Left ventricle myocardium inferior (tissue), 1 donor: ENCODE measurements at regions of chr18 and their contacts with region 1.

Region 1: GRCh38 chr18:74337155-74337911 is 21.7 kb downstream of the C18orf63 start:
- DNase-seq: no peak
- H3K4me3 ChIP-seq: no peak overlapping the region
- H3K27ac ChIP-seq: no peak overlapping the region
- H3K4me1 ChIP-seq: no peaks in the 10 kb centered on the region
- H3K27me3 ChIP-seq: no peaks in the 10 kb centered on the region
- CTCF ChIP-seq: no peak

Region 2: DNA sequence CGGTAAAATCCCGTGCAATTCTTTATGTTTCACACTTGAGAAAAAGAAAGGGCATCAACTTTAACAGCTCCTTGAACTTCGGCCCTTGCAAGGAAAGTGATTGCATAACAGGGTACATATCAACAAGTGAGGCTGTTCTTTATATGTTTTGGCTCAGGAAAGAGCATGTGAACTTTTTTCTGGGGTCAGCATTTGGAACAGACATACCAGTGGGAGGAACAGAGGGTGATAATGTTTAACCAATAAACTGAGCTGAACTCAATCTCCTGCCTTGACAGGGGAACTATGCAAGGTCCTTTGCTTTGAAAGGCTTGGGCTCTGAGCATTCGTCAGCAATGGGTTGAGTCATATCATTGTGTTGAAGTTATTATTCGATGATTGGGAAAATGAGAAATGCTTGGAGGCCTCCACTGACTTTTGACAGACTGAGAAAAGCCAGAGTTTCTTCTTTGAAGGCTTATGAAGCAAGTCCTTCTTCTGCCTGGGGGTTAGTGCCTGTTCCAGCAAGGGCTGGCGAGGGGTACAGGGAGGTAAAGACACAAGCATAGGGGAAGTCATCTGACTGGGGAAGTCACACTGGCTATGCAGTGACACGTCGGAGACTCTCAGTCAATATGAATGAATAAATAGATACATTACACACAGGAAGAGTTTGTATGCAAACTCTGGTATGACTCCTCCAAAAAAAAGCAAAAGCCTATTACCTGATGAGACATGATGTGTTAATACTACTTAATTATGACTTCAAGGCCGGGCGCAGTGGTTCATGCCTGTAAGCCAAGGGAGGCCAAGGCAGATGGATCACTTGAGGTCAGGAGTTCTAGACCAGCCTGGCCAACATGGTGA is 102.8 kb before region 1 on chr18:
- intact Hi-C with region 1: loop called (anchors 5 kb)
- DNase-seq: no peak
- H3K4me3 ChIP-seq: no peak overlapping the region
- H3K27ac ChIP-seq: peak overlapping the region; percentile 50
- H3K4me1 ChIP-seq: peaks cover 14% of the 10 kb centered on the region
- H3K27me3 ChIP-seq: peaks cover 6% of the 10 kb centered on the region
- CTCF ChIP-seq: no peak

Region 3: GRCh38 chr18:74679006-74679678 is 341.8 kb after region 1 on chr18:
- intact Hi-C with region 1: no loop called
- DNase-seq: no peak
- H3K4me3 ChIP-seq: no peak overlapping the region
- H3K27ac ChIP-seq: no peak overlapping the region
- H3K4me1 ChIP-seq: no peaks in the 10 kb centered on the region
- H3K27me3 ChIP-seq: no peaks in the 10 kb centered on the region
- CTCF ChIP-seq: no peak

Region 4: DNA sequence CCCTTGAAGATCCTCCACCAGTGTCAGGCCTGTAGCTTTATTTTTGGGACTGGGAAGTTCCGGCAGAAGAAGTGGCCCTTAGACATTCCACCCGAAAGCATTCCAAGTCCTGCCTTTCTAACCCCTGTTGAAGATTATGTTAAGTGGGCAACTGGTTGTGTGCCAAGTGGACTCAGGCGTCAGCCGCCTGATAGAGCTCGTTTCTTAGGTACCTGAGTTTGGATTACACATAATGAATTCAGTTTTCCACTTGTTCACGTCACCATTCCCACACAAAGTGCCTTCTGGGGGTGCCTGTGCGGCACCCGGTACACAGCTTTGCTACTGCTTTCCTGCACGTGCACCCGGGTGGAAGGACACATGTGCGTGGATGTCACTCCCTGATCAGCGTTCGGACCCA is 715.1 kb after region 1 on chr18:
- intact Hi-C with region 1: no loop called
- DNase-seq: no peak
- H3K4me3 ChIP-seq: no peak overlapping the region
- H3K27ac ChIP-seq: peak overlapping the region; percentile 82
- H3K4me1 ChIP-seq: peaks cover 65% of the 10 kb centered on the region
- H3K27me3 ChIP-seq: no peaks in the 10 kb centered on the region
- CTCF ChIP-seq: no peak